PC-9 (cell line): ENCODE measurements at regions of chrX and their contacts with region 1.

Region 1: GRCh38 chrX:29662759-29663503 is 552.4 kb upstream of the MAGEB2 start:
- DNase-seq: peak; percentile 63 to 90
- H3K4me3 ChIP-seq: peak overlapping the region; percentile 14; the same call in 1 of the 2 replicates
- H3K27ac ChIP-seq: peak overlapping the region; percentile 92
- H3K4me1 ChIP-seq: peaks cover 29% of the 10 kb centered on the region
- H3K27me3 ChIP-seq: no peaks in the 10 kb centered on the region
- CTCF ChIP-seq: no peak

Region 2: DNA sequence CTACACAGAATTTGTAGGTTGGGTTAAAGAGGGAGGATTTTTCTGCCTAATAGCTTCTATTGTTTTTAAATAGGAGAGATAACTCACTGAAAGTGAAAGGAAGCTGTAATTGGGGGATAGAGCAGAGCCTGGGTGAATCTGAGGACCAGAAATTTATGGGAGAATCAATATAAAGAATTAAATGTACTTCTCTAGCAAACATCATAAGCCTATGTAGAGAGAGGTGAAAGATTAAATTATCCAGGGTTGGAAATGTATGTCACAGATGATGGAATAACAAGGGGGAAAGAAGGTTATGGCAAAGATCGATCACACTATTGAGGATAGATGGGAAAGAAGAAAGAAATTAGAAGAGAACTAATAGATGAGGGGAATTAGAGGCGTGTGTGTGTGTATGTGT is 1577.3 kb before region 1 on chrX:
- CTCF ChIA-PET with region 1: interaction called, 14 read pairs
- POLR2A ChIA-PET with region 1: no interaction called
- intact Hi-C with region 1: no loop called
- DNase-seq: no peak
- H3K4me3 ChIP-seq: no peak overlapping the region
- H3K27ac ChIP-seq: no peak overlapping the region
- H3K4me1 ChIP-seq: no peaks in the 10 kb centered on the region
- H3K27me3 ChIP-seq: no peaks in the 10 kb centered on the region
- CTCF ChIP-seq: no peak

Region 3: DNA sequence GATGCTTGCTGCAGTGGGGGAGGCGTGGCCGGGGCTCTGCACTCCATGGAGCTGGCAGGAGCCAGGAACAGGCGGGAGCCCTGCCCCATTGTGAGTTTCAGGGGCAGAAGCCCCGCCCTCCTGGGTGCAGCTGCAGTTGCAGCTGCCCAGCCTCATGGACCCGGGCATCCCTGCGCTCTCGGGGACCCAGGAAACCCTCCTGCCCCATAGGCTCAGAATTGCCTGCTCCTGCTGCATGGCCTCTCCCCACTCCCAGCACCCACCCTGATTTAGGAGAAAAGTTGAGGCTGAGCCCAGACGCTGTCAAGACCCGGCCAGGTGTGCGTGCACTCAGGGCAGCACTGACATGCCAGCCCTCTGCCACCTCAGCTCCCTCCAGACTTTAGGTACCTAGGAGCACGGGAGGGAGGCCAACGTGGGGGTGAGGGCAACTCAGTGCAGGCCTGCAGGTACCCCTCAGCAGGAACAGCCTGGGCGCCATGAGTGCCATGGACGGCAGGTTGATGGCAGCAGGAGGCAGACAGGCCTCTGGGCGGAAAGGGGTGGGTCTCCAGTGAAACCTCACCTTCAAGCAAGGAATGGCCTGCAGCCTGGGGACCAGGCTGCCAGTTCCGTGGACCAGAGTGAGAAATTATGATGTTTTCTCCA is 485.2 kb after region 1 on chrX:
- CTCF ChIA-PET with region 1: no interaction called
- POLR2A ChIA-PET with region 1: no interaction called
- intact Hi-C with region 1: loop called (anchors 2 kb)
- DNase-seq: no peak
- H3K4me3 ChIP-seq: no peak overlapping the region
- H3K27ac ChIP-seq: no peak overlapping the region
- H3K4me1 ChIP-seq: peaks cover 23% of the 10 kb centered on the region
- H3K27me3 ChIP-seq: no peaks in the 10 kb centered on the region
- CTCF ChIP-seq: no peak